ENCODE measurements at regions of chr1 and their contacts with region 1.

Region 1: GRCh38 chr1:8077120-8077573 is 51.0 kb upstream of the ERRFI1 start:
- DNase-seq: peak; percentile 79

Region 2: DNA sequence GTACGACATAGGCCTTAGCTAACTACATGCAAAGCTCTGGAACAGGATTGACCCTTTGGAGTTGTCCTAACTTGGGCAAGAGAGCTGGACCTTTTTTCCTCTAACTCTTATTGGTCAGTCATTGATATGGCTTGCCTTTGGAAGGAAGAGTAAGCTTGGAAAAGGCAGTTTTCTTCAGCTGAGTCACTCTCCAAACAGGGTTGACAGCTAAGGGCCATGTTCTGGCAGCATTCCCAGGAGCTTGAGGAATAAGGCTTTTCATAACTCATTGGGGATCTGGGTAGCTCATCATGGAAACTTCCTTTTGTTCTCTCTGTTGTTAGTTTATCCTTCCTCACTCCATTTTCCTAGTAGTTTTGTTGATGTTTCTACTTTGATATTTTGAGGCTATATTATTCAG is 36.6 kb before region 1 on chr1:
- intact Hi-C with region 1: loop called (anchors 1 kb)
- DNase-seq: no peak

Region 3: GRCh38 chr1:8061210-8061609 is 15.9 kb before region 1 on chr1:
- intact Hi-C with region 1: no loop called
- DNase-seq: no peak

Region 4: DNA sequence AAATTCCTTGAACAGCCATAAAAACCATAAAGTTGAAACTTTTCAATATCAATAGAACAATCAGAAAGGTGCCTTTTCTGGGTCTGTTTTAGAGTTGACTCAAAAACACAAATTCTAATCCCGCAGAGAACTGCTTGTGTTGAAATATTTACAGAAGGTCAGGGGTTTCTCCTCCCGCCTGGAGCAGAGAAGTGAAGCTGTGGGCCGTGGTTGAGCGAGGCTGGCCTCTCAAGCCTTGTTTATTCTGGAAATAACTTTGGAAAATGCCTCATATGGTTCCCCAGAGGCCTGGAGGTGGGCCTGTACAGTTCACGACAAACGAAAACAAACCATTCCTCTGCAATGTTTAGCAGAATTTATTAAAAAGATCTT is 39.7 kb after region 1 on chr1:
- intact Hi-C with region 1: loop called (anchors 5 kb)
- DNase-seq: no peak

Region 5: DNA sequence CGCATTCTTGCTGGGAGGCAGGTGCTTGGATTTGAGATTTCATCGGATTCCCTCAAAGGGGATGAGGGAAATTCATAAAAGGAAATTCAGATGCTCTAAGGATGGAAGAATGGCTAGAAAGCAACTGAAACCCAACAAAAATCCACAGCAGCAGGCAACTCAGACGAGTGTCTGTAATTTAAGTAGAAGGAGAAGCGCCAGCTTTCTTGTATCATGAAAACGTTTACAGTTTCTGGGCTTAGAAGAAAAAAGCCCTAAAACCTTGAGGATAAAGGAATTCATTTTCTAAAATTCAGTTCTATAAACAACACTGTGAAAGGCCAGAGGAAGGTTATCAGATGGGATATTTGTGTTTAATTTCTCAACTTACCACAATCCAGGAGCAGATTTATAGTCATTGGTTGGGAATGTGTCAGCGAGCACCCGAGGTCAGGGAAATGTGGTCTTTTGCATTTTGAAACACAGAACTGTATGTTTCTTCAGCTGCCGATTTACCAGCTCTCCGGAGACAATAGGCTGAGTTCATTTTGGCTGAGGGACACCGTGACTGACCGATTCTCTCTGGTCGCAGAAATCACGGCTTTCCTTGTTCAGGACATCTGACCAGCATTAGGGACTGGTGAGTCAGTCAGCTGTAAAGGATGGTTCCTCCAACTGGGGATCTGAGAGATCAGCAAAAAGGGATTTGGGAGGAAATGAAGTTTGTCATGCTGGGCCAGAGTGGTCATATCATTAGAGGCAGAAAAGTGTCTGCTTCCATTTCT is 60.5 kb after region 1 on chr1:
- intact Hi-C with region 1: loop called (anchors 5 kb)
- DNase-seq: no peak